ENCODE measurements at regions of chr7 and their contacts with region 1.

Region 1: GRCh38 chr7:32142649-32143048 is 72.4 kb upstream of the PDE1C start:
- DNase-seq: peak; percentile 24
- H3K4me3 ChIP-seq: no peak overlapping the region
- H3K27ac ChIP-seq: no peak overlapping the region
- H3K4me1 ChIP-seq: peaks cover 6% of the 10 kb centered on the region
- H3K27me3 ChIP-seq: no peaks in the 10 kb centered on the region
- CTCF ChIP-seq: no peak

Region 2: DNA sequence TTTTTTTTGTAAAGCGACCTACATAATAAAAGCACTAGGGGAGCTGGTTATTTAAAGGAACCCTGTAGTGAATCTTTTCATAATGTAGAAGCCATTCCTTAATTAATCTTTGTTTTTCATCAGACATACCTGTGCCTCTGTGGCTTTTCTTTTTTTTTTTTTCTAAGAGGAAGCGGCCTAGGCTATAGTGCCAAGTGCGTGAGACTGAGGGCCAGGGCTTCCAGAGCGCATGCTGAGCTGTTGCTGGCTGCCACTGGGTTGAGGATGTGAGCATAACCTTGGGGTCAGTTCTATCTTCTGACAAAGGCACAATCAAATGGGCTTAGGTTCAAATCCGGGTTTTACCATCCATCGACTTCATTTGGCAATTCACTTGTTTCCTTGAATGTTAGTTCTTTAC is 905.8 kb before region 1 on chr7:
- CTCF ChIA-PET with region 1: interaction called, 11 read pairs
- dilution Hi-C with region 1: no loop called
- in situ Hi-C with region 1: no loop called
- intact Hi-C with region 1: no loop called
- DNase-seq: no peak
- H3K4me3 ChIP-seq: no peak overlapping the region
- H3K27ac ChIP-seq: no peak overlapping the region
- H3K4me1 ChIP-seq: no peaks in the 10 kb centered on the region
- H3K27me3 ChIP-seq: peaks cover 6% of the 10 kb centered on the region
- CTCF ChIP-seq: no peak